CD4-positive, alpha-beta memory T cell (primary cell): ENCODE measurements at regions of chr17 and their contacts with region 1.

Region 1: DNA sequence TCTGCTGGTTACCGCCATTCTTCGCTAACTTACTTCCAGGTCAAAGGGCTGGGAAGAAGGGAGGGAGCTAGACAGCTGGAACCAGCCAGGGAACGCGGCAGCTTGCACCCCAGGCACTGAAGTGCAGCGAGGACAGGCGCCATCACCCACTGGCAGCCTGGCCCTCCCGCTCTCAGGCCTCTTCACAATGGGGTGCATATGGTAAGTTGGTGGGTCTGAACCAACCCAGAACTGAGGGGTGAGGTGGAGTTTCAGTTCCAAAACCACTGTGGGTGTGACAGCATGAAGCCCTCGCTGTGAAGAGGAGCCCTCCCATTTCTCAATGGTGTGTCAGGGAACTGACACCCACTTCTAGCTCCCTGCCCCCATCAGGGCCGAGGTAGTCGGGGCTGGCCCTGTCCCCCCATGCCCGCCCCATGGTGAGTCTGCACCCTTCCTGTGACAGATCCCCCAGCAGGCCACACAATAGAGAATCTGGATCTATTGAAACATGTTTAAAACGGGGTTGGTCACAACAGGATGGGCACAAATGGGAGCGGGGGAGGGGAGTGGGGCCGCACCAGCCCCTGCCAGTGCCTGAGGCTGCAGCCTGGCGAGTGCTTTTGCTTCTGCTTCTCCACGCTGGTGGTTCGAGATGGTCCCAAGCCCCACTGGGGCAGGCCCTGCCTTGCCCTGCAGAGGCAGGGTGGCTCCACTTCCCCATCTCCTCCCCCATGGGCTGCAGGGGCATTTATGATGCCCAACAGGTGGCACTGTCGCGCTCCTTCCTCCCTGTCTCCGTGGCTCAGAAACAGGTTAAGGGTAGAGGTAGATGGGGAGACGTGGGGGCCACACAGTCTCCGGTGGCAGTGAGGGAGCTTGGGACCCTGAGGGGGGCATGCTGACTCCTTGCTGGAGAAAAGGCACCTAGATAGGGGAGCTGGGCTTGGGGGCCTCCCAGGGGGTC is 2.3 kb downstream of the LIMD2 start:
- DNase-seq: peak; percentile 85 to 87 (median 86)
- H3K4me3 ChIP-seq: peak overlapping the region; percentile 90 to 98
- H3K4me3 Mint-ChIP-seq: peak overlapping the region; percentile 94 to 99 (median 98)
- H3K27ac ChIP-seq: peak overlapping the region; percentile 69
- H3K27ac Mint-ChIP-seq: peak overlapping the region; percentile 96 to 99 (median 98)
- H3K4me1 ChIP-seq: peaks cover 62% of the 10 kb centered on the region
- H3K4me1 Mint-ChIP-seq: peaks cover 21 to 73% (median 47%) of the 10 kb centered on the region in 4 donors
- H3K27me3 ChIP-seq: no peaks in the 10 kb centered on the region
- H3K27me3 Mint-ChIP-seq: no peaks in the 10 kb centered on the region

Region 2: GRCh38 chr17:63445979-63446691 is 251.5 kb before region 1 on chr17 and contains the start of gene CYB561:
- CTCF ChIA-PET with region 1: no interaction called
- POLR2A ChIA-PET with region 1: interaction called, 36 read pairs
- intact Hi-C with region 1: no loop called
- DNase-seq: peak; percentile 74 to 81 (median 75)
- H3K4me3 ChIP-seq: peak within 1 kb of the TSS; percentile 67 to 73
- H3K4me3 Mint-ChIP-seq: peak within 1 kb of the TSS; percentile 80 to 89 (median 85)
- H3K27ac ChIP-seq: peak within 1 kb of the TSS; percentile 94
- H3K27ac Mint-ChIP-seq: peak within 1 kb of the TSS; percentile 91 to 98 (median 95)
- H3K4me1 ChIP-seq: peaks cover 48% of the 10 kb centered on the region
- H3K4me1 Mint-ChIP-seq: peaks cover 25 to 60% (median 43%) of the 10 kb centered on the region in 4 donors
- H3K27me3 ChIP-seq: no peaks in the 10 kb centered on the region
- H3K27me3 Mint-ChIP-seq: peaks cover 0 to 3% of the 10 kb centered on the region in 2 donors
- total RNA-seq, gene CYB561: 81.0 to 83.7 TPM

Region 3: GRCh38 chr17:63621766-63622519 is 75.7 kb before region 1 on chr17 and contains the start of gene MAP3K3:
- CTCF ChIA-PET with region 1: interaction called, 5 read pairs
- POLR2A ChIA-PET with region 1: interaction called, 96 read pairs
- intact Hi-C with region 1: loop called (anchors 5 kb)
- DNase-seq: peak; percentile 97 to 100 (median 98)
- H3K4me3 ChIP-seq: peak within 1 kb of the TSS; percentile 61 to 77
- H3K4me3 Mint-ChIP-seq: peak within 1 kb of the TSS; percentile 95 to 99 (median 98)
- H3K27ac ChIP-seq: peak within 1 kb of the TSS; percentile 79
- H3K27ac Mint-ChIP-seq: peak within 1 kb of the TSS; percentile 90 to 96 (median 94)
- H3K4me1 ChIP-seq: peaks cover 44% of the 10 kb centered on the region
- H3K4me1 Mint-ChIP-seq: peaks cover 29 to 50% (median 40%) of the 10 kb centered on the region in 4 donors
- H3K27me3 ChIP-seq: no peaks in the 10 kb centered on the region
- H3K27me3 Mint-ChIP-seq: no peaks in the 10 kb centered on the region
- total RNA-seq, gene MAP3K3: 98.5 to 98.8 TPM

Region 4: GRCh38 chr17:63714547-63715277 is 17.1 kb after region 1 on chr17:
- CTCF ChIA-PET with region 1: interaction called, 315 read pairs
- POLR2A ChIA-PET with region 1: interaction called, 1,362 read pairs
- intact Hi-C with region 1: loop called (anchors 1 kb)
- DNase-seq: no peak
- H3K4me3 ChIP-seq: no peak overlapping the region
- H3K4me3 Mint-ChIP-seq: no peak overlapping the region
- H3K27ac ChIP-seq: no peak overlapping the region
- H3K27ac Mint-ChIP-seq: peak overlapping the region in 3 of 7 donors; percentile 6 to 42 (median 7)
- H3K4me1 ChIP-seq: peaks cover 12% of the 10 kb centered on the region
- H3K4me1 Mint-ChIP-seq: peaks cover 10 to 20% (median 13%) of the 10 kb centered on the region in 4 donors
- H3K27me3 ChIP-seq: no peaks in the 10 kb centered on the region
- H3K27me3 Mint-ChIP-seq: no peaks in the 10 kb centered on the region

Region 5: GRCh38 chr17:63798572-63799106 is 101.0 kb after region 1 on chr17:
- CTCF ChIA-PET with region 1: interaction called, 4 read pairs
- POLR2A ChIA-PET with region 1: interaction called, 12 read pairs
- intact Hi-C with region 1: no loop called
- DNase-seq: no peak
- H3K4me3 ChIP-seq: no peak overlapping the region
- H3K4me3 Mint-ChIP-seq: no peak overlapping the region
- H3K27ac ChIP-seq: no peak overlapping the region
- H3K27ac Mint-ChIP-seq: no peak overlapping the region
- H3K4me1 ChIP-seq: no peaks in the 10 kb centered on the region
- H3K4me1 Mint-ChIP-seq: peaks cover 0 to 6% (median 0%) of the 10 kb centered on the region in 4 donors
- H3K27me3 ChIP-seq: no peaks in the 10 kb centered on the region
- H3K27me3 Mint-ChIP-seq: no peaks in the 10 kb centered on the region

Region 6: DNA sequence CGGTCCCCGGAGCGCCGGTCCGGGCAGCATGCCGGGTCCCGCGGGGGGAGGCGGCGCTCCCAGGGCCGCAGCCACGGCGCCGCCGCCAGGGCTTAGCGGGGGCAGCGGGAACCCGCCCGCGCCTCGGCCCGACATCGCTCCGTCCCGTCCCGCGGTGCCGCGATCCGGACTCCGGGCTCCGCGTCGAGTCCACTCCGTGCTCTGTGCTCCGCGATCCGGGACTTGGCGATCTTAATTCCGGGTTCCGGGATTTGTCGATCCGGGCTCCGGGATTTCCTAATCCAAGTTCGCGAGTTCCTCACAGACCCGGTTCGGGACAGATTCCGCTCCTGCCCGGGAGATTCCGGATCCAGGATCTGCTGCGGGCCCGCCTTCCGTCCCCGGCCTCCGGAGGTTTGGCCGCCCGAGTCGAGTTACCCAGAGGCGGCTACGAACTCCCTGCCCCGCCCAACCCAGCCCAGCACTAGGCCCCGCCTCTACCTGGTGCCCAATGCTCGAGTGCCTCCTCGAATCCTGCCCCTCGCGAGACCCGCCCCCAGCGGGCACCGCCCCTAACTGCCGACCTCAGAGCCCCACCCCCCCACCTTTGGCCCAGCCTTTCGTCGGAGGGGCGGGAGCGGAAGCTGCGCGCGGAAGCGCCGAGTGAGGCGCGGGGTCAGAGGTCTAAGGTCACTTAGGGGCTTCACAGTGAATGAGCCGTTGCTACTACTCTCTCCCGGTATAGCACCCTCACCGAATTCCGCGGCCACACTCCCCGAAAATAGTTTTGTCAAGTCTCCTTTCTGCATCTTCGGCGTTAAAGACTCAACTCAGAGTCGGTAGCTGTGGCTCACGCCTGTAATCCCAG is 145.1 kb after region 1 on chr17 and contains the start of gene SMARCD2:
- CTCF ChIA-PET with region 1: no interaction called
- POLR2A ChIA-PET with region 1: interaction called, 56 read pairs
- intact Hi-C with region 1: loop called (anchors 2 kb)
- DNase-seq: peak; percentile 97 to 98 (median 98)
- H3K4me3 ChIP-seq: peak within 1 kb of the TSS; percentile 58 to 72
- H3K4me3 Mint-ChIP-seq: peak within 1 kb of the TSS; percentile 86 to 97 (median 94)
- H3K27ac ChIP-seq: peak within 1 kb of the TSS; percentile 84
- H3K27ac Mint-ChIP-seq: peak within 1 kb of the TSS; percentile 87 to 96 (median 95)
- H3K4me1 ChIP-seq: peaks cover 48% of the 10 kb centered on the region
- H3K4me1 Mint-ChIP-seq: peaks cover 17 to 57% (median 35%) of the 10 kb centered on the region in 4 donors
- H3K27me3 ChIP-seq: no peaks in the 10 kb centered on the region
- H3K27me3 Mint-ChIP-seq: no peaks in the 10 kb centered on the region
- total RNA-seq, gene SMARCD2: 113 to 114 TPM

Region 7: GRCh38 chr17:64133546-64134215 is 436.1 kb after region 1 on chr17:
- CTCF ChIA-PET with region 1: no interaction called
- POLR2A ChIA-PET with region 1: no interaction called
- intact Hi-C with region 1: no loop called
- DNase-seq: peak in 4 of 5 donors; percentile 52 to 68 (median 62)
- H3K4me3 ChIP-seq: no peak overlapping the region
- H3K4me3 Mint-ChIP-seq: peak overlapping the region in 1 of 8 donors; percentile 63
- H3K27ac ChIP-seq: no peak overlapping the region
- H3K27ac Mint-ChIP-seq: peak overlapping the region in 4 of 7 donors; percentile 76 to 86 (median 80)
- H3K4me1 ChIP-seq: peaks cover 18% of the 10 kb centered on the region
- H3K4me1 Mint-ChIP-seq: peaks cover 11 to 29% (median 19%) of the 10 kb centered on the region in 4 donors
- H3K27me3 ChIP-seq: no peaks in the 10 kb centered on the region
- H3K27me3 Mint-ChIP-seq: peaks cover 0 to 1% of the 10 kb centered on the region in 2 donors

Region 8: GRCh38 chr17:64506576-64507477 is 809.2 kb after region 1 on chr17 and contains the start of gene CEP95:
- CTCF ChIA-PET with region 1: no interaction called
- POLR2A ChIA-PET with region 1: interaction called, 25 read pairs
- intact Hi-C with region 1: loop called (anchors 10 kb)
- DNase-seq: peak in 3 of 5 donors; percentile 92 to 98 (median 97)
- H3K4me3 ChIP-seq: peak within 1 kb of the TSS; percentile 89 to 97
- H3K4me3 Mint-ChIP-seq: peak within 1 kb of the TSS; percentile 95 to 100 (median 100)
- H3K27ac ChIP-seq: peak within 1 kb of the TSS; percentile 98
- H3K27ac Mint-ChIP-seq: peak within 1 kb of the TSS; percentile 98 to 100 (median 100)
- H3K4me1 ChIP-seq: peaks cover 49% of the 10 kb centered on the region
- H3K4me1 Mint-ChIP-seq: peaks cover 43 to 75% (median 56%) of the 10 kb centered on the region in 4 donors
- H3K27me3 ChIP-seq: no peaks in the 10 kb centered on the region
- H3K27me3 Mint-ChIP-seq: peaks cover 0 to 4% of the 10 kb centered on the region in 2 donors
- total RNA-seq, gene CEP95: 105 to 108 TPM